Pancreas (tissue), 10 donors: ENCODE measurements at regions of chr5 and their contacts with region 1.

Region 1: GRCh38 chr5:71782771-71783770 is 64.0 kb downstream of the CARTPT start:
- DNase-seq: peak; percentile 43 to 79 (median 61)
- ATAC-seq: peak; percentile 80 to 95 (median 94)
- H3K4me3 ChIP-seq: peak overlapping the region in 1 of 4 donors; percentile 11
- H3K27ac ChIP-seq: no peak overlapping the region
- H3K4me1 ChIP-seq: peaks cover 0 to 4% (median 0%) of the 10 kb centered on the region in 3 donors
- H3K27me3 ChIP-seq: no peaks in the 10 kb centered on the region
- CTCF ChIP-seq: peak; percentile 31 to 63 (median 60)

Region 2: GRCh38 chr5:71684309-71684708 is 98.8 kb before region 1 on chr5:
- intact Hi-C with region 1: no loop called
- DNase-seq: no peak
- ATAC-seq: no peak
- H3K4me3 ChIP-seq: no peak overlapping the region
- H3K27ac ChIP-seq: no peak overlapping the region
- H3K4me1 ChIP-seq: no peaks in the 10 kb centered on the region
- H3K27me3 ChIP-seq: no peaks in the 10 kb centered on the region
- CTCF ChIP-seq: no peak

Region 3: DNA sequence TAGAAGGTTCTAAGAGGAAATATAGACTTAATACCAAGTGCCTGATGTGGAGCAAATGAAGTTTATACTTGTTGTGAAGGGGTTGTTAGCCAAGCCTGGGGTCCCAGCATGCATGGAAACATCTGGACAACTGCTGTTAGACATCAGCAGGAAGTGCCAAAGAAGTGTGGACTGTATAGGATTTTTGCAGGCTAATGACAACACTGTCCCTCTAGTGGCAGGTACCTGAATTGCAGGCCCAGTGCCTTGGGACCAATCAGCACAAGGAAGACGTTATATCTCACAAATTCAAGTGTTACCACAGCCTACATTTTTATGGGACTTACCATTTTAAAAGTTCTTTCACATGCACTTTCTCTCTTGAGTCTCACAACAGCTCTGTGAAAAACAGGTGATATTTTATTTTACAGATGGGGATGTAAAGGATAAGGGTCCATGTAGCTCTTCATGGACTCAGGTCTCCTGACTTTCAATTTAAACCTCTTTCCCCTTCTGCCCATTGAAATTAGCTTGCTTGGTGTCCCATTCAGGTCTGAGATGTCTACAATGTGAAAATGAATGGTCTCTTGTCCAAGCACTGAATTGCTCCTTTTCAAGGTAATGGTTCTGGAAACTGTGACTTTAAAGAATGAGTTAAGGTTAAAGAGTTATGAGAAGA is 235.2 kb after region 1 on chr5:
- intact Hi-C with region 1: loop called in 1 of 3 experiments (anchors 5 kb)
- DNase-seq: peak in 5 of 6 donors; percentile 23 to 83 (median 57)
- ATAC-seq: peak; percentile 66 to 86 (median 74)
- H3K4me3 ChIP-seq: no peak overlapping the region
- H3K27ac ChIP-seq: no peak overlapping the region
- H3K4me1 ChIP-seq: no peaks in the 10 kb centered on the region
- H3K27me3 ChIP-seq: no peaks in the 10 kb centered on the region
- CTCF ChIP-seq: peak; percentile 88 to 97 (median 95)

Region 4: GRCh38 chr5:72307968-72308852 is 525.1 kb after region 1 on chr5:
- intact Hi-C with region 1: loop called in 1 of 3 experiments (anchors 10 kb)
- DNase-seq: peak; percentile 96 to 98 (median 98)
- ATAC-seq: peak; percentile 96 to 99 (median 98)
- H3K4me3 ChIP-seq: peak overlapping the region; percentile 35 to 70 (median 66)
- H3K27ac ChIP-seq: peak overlapping the region; percentile 86 to 95 (median 88)
- H3K4me1 ChIP-seq: peaks cover 0 to 9% (median 4%) of the 10 kb centered on the region in 3 donors
- H3K27me3 ChIP-seq: no peaks in the 10 kb centered on the region
- CTCF ChIP-seq: peak; percentile 69 to 86 (median 72)